Activated T-helper 2 cell treated with anti-CD3 and anti-CD28 coated beads, Interferon-gamma antibody, Interleukin-2, Interleukin-4, amounts not matched to agents 10 μg/mL and 5 μg/mL and 100 μg/mL, durations not matched to agents 14 hours and 24 hours and 36 hours (primary cell): ENCODE measurements at regions of chr3 and their contacts with region 1.

Region 1: DNA sequence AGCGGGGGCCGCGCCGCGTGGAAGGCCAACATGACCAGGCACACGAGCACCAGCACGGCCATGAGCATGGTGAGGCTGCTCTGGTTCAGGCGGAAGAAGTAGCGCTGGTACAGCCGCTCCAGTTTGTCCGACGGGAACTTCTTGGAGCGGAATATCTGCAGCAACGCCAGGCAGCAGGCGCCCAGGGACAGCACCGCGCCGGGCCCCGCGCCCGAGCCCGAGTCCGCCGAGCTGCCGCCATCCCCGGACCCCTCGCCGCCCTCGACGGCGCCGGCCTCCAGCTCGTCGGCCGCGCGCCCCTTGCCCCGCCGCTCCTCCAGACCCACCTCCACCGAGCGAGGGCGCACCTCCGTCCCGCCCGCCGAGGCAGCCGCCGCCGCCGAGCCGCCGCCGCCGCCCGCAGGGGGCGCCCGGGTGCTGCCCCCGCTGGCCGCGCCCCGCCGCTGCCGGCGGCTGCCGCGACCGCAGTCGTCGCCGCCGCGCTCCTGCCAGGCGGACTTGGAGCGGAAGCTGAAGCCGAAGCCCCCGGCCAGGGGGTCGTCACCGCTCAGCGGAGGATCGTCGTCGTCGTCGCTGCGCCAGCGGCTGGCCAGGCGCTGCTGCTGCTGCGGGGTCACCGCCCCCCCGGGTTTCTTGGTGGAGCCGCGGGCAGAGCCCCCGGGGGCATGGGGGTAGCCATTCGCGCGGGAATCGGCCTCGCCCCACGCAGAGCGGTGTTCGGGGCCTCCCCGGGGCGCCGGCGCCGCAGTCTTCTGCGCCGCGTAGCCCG is 957 bp downstream of the ADCY5 start:
- DNase-seq: peak; percentile 31
- H3K4me3 Mint-ChIP-seq: no peak overlapping the region
- H3K27ac Mint-ChIP-seq: no peak overlapping the region
- H3K4me1 Mint-ChIP-seq: no peaks in the 10 kb centered on the region
- H3K27me3 Mint-ChIP-seq: peaks cover 55% of the 10 kb centered on the region

Region 2: GRCh38 chr3:123489400-123490004 is 41.6 kb after region 1 on chr3:
- intact Hi-C with region 1: loop called (anchors 5 kb)
- DNase-seq: no peak
- H3K4me3 Mint-ChIP-seq: no peak overlapping the region
- H3K27ac Mint-ChIP-seq: no peak overlapping the region
- H3K4me1 Mint-ChIP-seq: no peaks in the 10 kb centered on the region
- H3K27me3 Mint-ChIP-seq: no peaks in the 10 kb centered on the region

Region 3: DNA sequence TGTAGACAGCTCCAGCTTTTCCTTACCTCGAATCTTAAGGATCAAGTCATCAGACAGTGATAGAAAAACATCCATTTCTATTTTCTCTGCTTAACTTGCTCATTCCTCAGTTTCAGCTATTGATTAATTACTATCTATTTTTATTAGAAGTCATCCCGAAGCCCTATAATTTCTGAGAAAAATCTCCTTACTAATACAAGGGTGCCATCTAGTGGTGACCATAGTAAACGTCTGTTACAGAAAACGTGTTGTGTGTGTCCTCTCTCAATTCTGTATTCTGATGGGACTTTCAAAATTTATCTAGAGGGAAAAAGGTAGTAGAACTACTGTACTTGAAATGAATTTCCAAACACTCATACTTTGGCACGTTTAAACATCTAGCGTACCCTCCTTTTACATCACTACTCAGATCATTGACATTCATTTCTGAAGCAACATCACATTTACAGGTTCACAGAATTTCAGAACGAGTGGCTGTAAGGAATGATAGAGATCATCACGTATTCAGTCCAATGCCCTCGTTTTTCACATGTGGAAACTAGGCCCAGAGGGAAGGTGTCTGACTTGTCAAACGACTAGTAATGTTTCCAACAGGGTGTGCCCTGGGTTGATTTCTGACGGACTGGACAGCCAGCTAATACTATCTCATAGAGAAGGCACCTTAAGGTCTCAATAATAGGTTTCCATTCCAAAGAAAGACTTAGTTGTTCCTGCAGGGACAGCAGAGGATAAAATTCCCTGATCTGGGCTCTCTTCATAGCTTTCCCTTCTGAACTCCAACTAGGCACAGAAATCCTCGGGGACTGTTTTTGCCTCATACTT is 111.3 kb after region 1 on chr3:
- intact Hi-C with region 1: loop called (anchors 2 kb)
- DNase-seq: no peak
- H3K4me3 Mint-ChIP-seq: no peak overlapping the region
- H3K27ac Mint-ChIP-seq: no peak overlapping the region
- H3K4me1 Mint-ChIP-seq: peaks cover 5% of the 10 kb centered on the region
- H3K27me3 Mint-ChIP-seq: no peaks in the 10 kb centered on the region

Region 4: DNA sequence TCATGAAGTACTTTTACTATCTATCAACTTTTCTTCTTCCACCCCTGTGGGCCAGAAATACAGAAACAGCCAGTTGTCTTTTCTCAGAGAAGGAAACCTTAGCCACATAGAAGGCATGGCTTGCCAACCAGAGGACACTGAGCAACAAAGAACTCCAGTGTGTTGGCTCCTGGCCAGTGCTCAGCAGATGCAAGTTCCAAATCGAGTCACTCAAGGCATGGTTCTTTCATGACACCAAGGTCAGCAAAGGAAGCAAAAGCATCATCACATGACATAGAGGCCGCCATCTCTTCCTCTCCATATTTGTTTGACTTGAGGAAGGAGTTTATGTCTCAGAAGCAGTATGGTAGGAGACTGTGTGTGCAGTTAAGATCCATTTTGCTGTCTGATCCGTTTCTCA is 344.0 kb after region 1 on chr3:
- intact Hi-C with region 1: no loop called
- DNase-seq: no peak
- H3K4me3 Mint-ChIP-seq: no peak overlapping the region
- H3K27ac Mint-ChIP-seq: no peak overlapping the region
- H3K4me1 Mint-ChIP-seq: no peaks in the 10 kb centered on the region
- H3K27me3 Mint-ChIP-seq: peaks cover 14% of the 10 kb centered on the region